Activated naive CD4-positive, alpha-beta T cell treated with anti-CD3 and anti-CD28 coated beads for 36 hours (primary cell): ENCODE measurements at regions of chr6 and their contacts with region 1.

Region 1: DNA sequence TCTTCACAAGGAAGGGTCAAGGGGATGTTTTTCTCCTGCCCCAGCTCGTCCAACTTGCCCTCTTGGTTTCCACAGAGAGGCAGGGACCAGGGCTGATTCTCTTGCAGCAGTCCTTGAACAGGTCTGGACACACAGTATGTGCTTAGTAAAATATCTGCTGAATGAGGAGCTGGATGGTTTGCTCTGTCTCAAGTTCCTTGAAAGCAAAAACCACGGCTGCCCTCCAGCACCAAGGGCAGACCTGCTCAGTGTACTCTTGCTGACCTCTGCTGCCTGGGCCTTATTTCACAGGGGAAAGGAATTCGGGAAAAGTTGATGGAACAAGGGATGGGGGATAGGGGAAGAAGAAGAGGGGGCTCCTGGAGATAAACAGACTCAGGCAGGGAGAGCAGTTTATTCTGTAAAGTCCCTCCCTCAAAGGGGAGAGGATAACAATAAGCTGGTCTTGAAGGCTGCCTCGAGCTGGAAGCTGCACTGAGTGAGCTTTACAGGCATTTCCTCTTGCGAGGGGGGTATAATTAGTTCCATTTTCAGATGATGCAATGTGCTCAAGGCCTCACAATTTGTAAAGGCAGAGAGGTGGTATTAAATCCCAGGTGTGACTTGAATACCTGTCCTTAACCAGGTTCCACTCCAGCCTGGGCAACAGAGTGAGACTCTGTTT is 10.3 kb downstream of the KCNK5 start:
- DNase-seq: no peak
- H3K4me3 Mint-ChIP-seq: no peak overlapping the region
- H3K27ac Mint-ChIP-seq: peak overlapping the region; percentile 60
- H3K4me1 Mint-ChIP-seq: peaks cover 41% of the 10 kb centered on the region
- H3K27me3 Mint-ChIP-seq: no peaks in the 10 kb centered on the region

Region 2: DNA sequence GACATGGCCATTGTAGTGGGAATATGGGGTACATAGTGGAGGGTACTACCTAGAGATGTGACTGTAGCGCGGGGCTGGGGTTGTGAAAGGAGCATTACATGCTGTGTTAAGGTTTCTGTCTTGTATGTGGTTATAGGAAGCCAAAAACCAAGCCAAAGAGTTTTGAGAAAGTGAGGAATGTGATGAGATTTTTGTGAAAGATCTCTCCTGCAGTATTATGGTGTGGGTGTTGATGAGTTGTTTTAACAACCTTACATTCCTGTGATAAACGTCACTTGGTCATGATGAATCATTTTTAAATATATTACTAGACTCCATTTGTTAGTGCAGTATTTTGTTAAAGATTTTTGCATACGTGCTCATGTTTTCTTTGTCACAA is 1350.6 kb before region 1 on chr6:
- CTCF ChIA-PET with region 1: no interaction called
- intact Hi-C with region 1: no loop called
- DNase-seq: peak; percentile 17
- H3K4me3 Mint-ChIP-seq: no peak overlapping the region
- H3K27ac Mint-ChIP-seq: peak overlapping the region; percentile 65
- H3K4me1 Mint-ChIP-seq: peaks cover 76% of the 10 kb centered on the region
- H3K27me3 Mint-ChIP-seq: no peaks in the 10 kb centered on the region

Region 3: GRCh38 chr6:39102071-39102820 is 116.8 kb before region 1 on chr6:
- CTCF ChIA-PET with region 1: no interaction called
- intact Hi-C with region 1: no loop called
- DNase-seq: peak; percentile 31
- H3K4me3 Mint-ChIP-seq: no peak overlapping the region
- H3K27ac Mint-ChIP-seq: no peak overlapping the region
- H3K4me1 Mint-ChIP-seq: peaks cover 25% of the 10 kb centered on the region
- H3K27me3 Mint-ChIP-seq: no peaks in the 10 kb centered on the region

Region 4: GRCh38 chr6:39239527-39240154 is 20.6 kb after region 1 on chr6:
- CTCF ChIA-PET with region 1: no interaction called
- intact Hi-C with region 1: loop called (anchors 1 kb)
- DNase-seq: no peak
- H3K4me3 Mint-ChIP-seq: no peak overlapping the region
- H3K27ac Mint-ChIP-seq: no peak overlapping the region
- H3K4me1 Mint-ChIP-seq: no peaks in the 10 kb centered on the region
- H3K27me3 Mint-ChIP-seq: no peaks in the 10 kb centered on the region